ENCODE measurements at regions of chr18 and their contacts with region 1.

Region 1: DNA sequence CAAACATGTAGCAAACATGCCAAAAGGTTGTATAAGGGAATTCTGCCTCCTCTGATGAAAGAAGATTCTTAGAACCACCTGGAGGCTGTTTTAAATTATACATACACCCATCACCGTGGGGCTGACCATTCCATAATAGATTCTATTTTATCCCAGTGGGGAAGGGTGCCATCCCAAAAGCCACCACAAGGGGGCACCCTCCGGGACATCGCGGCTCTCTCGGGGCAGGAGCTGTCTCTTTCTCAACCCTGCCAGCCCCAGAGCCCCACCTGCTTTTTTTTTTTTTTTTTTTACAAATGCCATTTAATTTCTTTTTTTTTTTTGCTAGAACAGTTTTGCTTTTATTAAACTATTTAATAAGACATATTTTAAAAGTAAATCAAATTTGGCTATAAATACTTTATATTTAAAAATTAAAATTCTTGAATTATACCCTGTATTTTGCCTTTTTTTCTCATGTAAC is 8.6 kb upstream of the MTCL1 start:
- DNase-seq: peak; percentile 56 to 70 (median 69)
- H3K4me3 ChIP-seq: no peak overlapping the region
- H3K27ac ChIP-seq: no peak overlapping the region
- H3K4me1 ChIP-seq: no peaks in the 10 kb centered on the region
- H3K27me3 ChIP-seq: peaks cover 0 to 12% (median 2%) of the 10 kb centered on the region in 5 experiments

Region 2: GRCh38 chr18:8681196-8681595 is 15.6 kb before region 1 on chr18:
- CTCF ChIA-PET with region 1: no interaction called
- POLR2A ChIA-PET with region 1: no interaction called
- DNase-seq: no peak
- H3K4me3 ChIP-seq: no peak overlapping the region
- H3K27ac ChIP-seq: no peak overlapping the region
- H3K4me1 ChIP-seq: no peaks in the 10 kb centered on the region
- H3K27me3 ChIP-seq: no peaks in the 10 kb centered on the region

Region 3: GRCh38 chr18:8982416-8983184 is 285.8 kb after region 1 on chr18:
- CTCF ChIA-PET with region 1: interaction called, 57 read pairs
- POLR2A ChIA-PET with region 1: no interaction called
- DNase-seq: peak; percentile 31 to 41 (median 31)
- H3K4me3 ChIP-seq: no peak overlapping the region
- H3K27ac ChIP-seq: no peak overlapping the region
- H3K4me1 ChIP-seq: no peaks in the 10 kb centered on the region
- H3K27me3 ChIP-seq: peaks cover 0 to 4% (median 0%) of the 10 kb centered on the region in 5 experiments

Measured in common myeloid progenitor, CD34-positive (primary cell).